ENCODE measurements at regions of chr19 and their contacts with region 1.

Region 1: DNA sequence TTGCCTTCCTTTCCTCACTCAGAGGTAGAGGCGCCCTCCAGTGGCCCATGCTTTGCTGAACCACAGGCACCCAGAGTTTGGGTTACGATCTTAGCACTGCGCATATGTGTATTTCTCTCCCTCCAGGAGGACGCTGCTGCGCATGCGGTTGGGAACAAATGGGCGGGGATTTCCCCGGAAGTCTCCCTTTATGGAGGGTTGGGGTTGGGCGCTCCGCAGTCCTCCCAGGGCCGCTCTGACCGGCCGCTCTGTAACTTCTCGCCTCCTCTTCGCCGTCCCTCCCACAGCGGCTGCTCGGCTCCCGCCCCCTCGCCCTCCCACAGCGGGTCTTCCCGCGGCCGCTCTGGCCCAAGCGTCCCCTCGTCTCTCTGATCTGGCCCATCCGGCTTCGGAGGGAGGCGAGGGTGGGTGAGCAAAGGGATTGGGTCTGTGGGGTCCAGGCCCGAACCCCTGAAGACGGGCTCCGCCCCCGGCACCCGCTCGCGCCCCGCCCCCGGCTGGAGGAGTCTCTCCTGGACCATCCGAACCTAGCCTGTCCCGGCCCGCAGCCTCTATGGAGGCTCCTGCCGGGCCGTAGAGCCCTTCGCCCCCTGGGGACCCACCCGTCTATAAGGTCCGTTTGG is at the start of gene MEGF8:
- DNase-seq: peak; percentile 99
- H3K4me3 Mint-ChIP-seq: peak within 1 kb of the TSS; percentile 79
- H3K27ac Mint-ChIP-seq: peak within 1 kb of the TSS; percentile 32
- H3K4me1 Mint-ChIP-seq: peaks cover 19% of the 10 kb centered on the region
- H3K27me3 Mint-ChIP-seq: peaks cover 13% of the 10 kb centered on the region
- total RNA-seq, gene MEGF8: 6.0 to 7.2 TPM

Region 2: GRCh38 chr19:42108527-42109389 is 216.6 kb before region 1 on chr19:
- CTCF ChIA-PET with region 1: interaction called, 4 read pairs
- POLR2A ChIA-PET with region 1: no interaction called
- intact Hi-C with region 1: loop called (anchors 1 kb)
- DNase-seq: peak; percentile 94
- H3K4me3 Mint-ChIP-seq: no peak overlapping the region
- H3K27ac Mint-ChIP-seq: no peak overlapping the region
- H3K4me1 Mint-ChIP-seq: peaks cover 55% of the 10 kb centered on the region
- H3K27me3 Mint-ChIP-seq: no peaks in the 10 kb centered on the region

Region 3: GRCh38 chr19:42219812-42220750 is 105.3 kb before region 1 on chr19 and contains the start of gene ZNF526:
- CTCF ChIA-PET with region 1: no interaction called
- POLR2A ChIA-PET with region 1: no interaction called
- intact Hi-C with region 1: loop called (anchors 1 kb)
- DNase-seq: peak; percentile 98
- H3K4me3 Mint-ChIP-seq: peak within 1 kb of the TSS; percentile 92
- H3K27ac Mint-ChIP-seq: peak within 1 kb of the TSS; percentile 99
- H3K4me1 Mint-ChIP-seq: peaks cover 43% of the 10 kb centered on the region
- H3K27me3 Mint-ChIP-seq: peaks cover 1% of the 10 kb centered on the region
- total RNA-seq, gene ZNF526: 12.3 to 14.9 TPM

Region 4: DNA sequence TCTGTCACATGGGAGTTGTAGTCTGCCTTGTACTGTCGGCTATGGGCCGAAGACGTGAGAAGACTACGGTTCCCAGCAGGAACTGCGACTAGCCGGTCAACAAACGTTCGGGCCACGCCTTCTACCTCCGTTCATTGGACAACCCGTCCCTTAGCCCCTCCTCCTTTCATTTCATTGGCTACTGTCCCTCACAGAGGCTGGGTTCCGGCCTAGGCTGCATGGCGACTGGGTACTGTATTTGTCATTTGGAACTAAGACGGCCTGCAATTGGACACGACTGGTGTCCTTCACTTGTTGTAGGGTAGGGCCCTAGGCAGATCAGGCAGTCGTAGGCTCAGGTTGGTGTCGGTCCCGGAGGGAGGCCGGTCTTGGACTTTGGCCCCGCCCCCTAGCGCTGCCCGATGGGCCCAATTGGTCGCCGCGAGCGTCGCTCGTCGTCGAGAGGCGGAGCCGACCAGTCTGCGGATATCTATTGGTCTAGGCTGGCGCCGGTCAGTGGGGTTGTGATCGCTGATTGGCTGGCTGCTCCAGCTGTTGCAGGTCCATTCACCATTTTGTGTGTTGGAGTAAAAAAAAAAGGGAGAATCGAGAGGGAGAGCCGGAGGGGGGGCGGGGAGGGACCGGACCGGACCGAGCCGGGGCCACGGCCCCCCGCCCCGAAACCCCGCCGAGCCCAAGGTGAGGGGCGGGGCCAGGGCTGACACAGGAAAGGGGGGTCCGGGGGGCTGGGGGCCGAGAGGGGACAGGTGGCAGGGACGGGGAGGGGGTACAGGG is 56.5 kb before region 1 on chr19 and contains the start of gene CIC:
- CTCF ChIA-PET with region 1: no interaction called
- POLR2A ChIA-PET with region 1: no interaction called
- intact Hi-C with region 1: no loop called
- DNase-seq: peak; percentile 99
- H3K4me3 Mint-ChIP-seq: no peak within 1 kb of the TSS
- H3K27ac Mint-ChIP-seq: no peak within 1 kb of the TSS
- H3K4me1 Mint-ChIP-seq: peaks cover 23% of the 10 kb centered on the region
- H3K27me3 Mint-ChIP-seq: no peaks in the 10 kb centered on the region
- total RNA-seq, gene CIC: 56.9 to 64.2 TPM

Region 5: DNA sequence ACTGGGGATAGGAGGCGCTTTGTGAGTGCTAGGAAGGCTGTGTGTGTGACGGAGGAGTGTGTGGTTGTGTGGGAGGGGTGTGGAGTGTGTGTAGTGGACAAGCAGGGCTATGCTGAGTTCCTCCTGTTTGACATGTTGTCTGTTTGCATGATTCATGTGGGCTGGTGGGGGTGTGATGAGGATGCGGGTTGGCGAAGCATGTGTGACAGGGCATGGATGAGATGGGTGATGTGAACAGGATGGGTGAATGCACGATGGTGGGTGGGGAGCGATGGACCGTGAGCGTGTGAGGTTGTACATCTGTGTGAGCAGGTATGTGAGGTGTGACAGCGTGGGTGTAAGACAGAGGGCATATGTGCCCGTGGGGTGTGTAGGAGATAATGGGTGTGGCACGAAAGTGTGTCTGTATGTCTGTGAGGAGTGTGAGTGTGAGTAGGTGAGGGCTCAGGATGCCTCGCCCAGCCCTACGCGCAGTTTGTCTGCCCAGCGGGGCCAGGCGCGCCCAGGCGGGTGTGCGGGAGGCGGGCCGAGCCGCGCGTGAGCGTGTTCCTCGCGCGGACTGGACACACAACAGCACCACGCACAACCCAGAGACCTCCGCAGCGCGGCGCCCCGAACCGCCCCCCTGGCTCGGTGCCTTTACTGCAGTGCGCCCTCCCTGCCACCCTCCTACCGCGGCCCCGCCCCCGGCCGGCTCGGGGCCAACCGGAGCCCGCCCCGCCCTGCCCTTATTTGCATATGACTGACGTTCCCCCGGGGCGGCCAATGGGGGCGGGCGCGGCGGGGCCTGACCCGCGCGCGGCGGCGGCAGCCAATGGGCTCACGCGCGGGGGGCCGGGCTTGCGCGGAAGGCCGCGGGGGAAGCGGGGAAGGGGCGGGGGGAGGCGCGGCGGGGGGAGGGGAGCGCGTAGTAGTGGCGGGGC is 42.0 kb before region 1 on chr19:
- CTCF ChIA-PET with region 1: interaction called, 3 read pairs
- POLR2A ChIA-PET with region 1: no interaction called
- intact Hi-C with region 1: loop called (anchors 1 kb)
- DNase-seq: peak; percentile 97
- H3K4me3 Mint-ChIP-seq: no peak overlapping the region
- H3K27ac Mint-ChIP-seq: no peak overlapping the region
- H3K4me1 Mint-ChIP-seq: peaks cover 44% of the 10 kb centered on the region
- H3K27me3 Mint-ChIP-seq: no peaks in the 10 kb centered on the region

Region 6: GRCh38 chr19:42386974-42387707 is 61.8 kb after region 1 on chr19:
- CTCF ChIA-PET with region 1: no interaction called
- POLR2A ChIA-PET with region 1: no interaction called
- intact Hi-C with region 1: loop called (anchors 2 kb)
- DNase-seq: peak; percentile 76
- H3K4me3 Mint-ChIP-seq: peak overlapping the region; percentile 58
- H3K27ac Mint-ChIP-seq: no peak overlapping the region
- H3K4me1 Mint-ChIP-seq: peaks cover 4% of the 10 kb centered on the region
- H3K27me3 Mint-ChIP-seq: peaks cover 29% of the 10 kb centered on the region